Vagina (tissue), 2 donors: ENCODE measurements at regions of chr5 and their contacts with region 1.

Region 1: GRCh38 chr5:137498736-137499505 is at the start of gene SPOCK1:
- DNase-seq: no peak
- H3K4me3 ChIP-seq: peak within 1 kb of the TSS; percentile 54 to 70
- H3K27ac ChIP-seq: no peak within 1 kb of the TSS
- H3K4me1 ChIP-seq: peaks cover 4% of the 10 kb centered on the region
- H3K27me3 ChIP-seq: no peaks in the 10 kb centered on the region
- CTCF ChIP-seq: peak; percentile 48 to 63 (median 58)
- POLR2A ChIP-seq: peak in 1 of 2 donors; percentile 40
- total RNA-seq, gene SPOCK1: 70.7 TPM

Region 2: GRCh38 chr5:136802383-136802782 is 696.5 kb before region 1 on chr5:
- intact Hi-C with region 1: loop called (anchors 5 kb)
- DNase-seq: no peak
- H3K4me3 ChIP-seq: no peak overlapping the region
- H3K27ac ChIP-seq: no peak overlapping the region
- H3K4me1 ChIP-seq: no peaks in the 10 kb centered on the region
- H3K27me3 ChIP-seq: no peaks in the 10 kb centered on the region
- CTCF ChIP-seq: no peak
- POLR2A ChIP-seq: no peak

Region 3: GRCh38 chr5:137320056-137321045 is 178.6 kb before region 1 on chr5:
- intact Hi-C with region 1: loop called (anchors 5 kb)
- DNase-seq: no peak
- H3K4me3 ChIP-seq: no peak overlapping the region
- H3K27ac ChIP-seq: no peak overlapping the region
- H3K4me1 ChIP-seq: no peaks in the 10 kb centered on the region
- H3K27me3 ChIP-seq: no peaks in the 10 kb centered on the region
- CTCF ChIP-seq: peak; percentile 44 to 80 (median 68)
- POLR2A ChIP-seq: no peak